Activated naive CD8-positive, alpha-beta T cell treated with anti-CD3 and anti-CD28 coated beads, Interleukin-2, amount 10 ng/mL, durations not matched to agents 7 days and 5 days (primary cell): ENCODE measurements at regions of chr17 and their contacts with region 1.

Region 1: DNA sequence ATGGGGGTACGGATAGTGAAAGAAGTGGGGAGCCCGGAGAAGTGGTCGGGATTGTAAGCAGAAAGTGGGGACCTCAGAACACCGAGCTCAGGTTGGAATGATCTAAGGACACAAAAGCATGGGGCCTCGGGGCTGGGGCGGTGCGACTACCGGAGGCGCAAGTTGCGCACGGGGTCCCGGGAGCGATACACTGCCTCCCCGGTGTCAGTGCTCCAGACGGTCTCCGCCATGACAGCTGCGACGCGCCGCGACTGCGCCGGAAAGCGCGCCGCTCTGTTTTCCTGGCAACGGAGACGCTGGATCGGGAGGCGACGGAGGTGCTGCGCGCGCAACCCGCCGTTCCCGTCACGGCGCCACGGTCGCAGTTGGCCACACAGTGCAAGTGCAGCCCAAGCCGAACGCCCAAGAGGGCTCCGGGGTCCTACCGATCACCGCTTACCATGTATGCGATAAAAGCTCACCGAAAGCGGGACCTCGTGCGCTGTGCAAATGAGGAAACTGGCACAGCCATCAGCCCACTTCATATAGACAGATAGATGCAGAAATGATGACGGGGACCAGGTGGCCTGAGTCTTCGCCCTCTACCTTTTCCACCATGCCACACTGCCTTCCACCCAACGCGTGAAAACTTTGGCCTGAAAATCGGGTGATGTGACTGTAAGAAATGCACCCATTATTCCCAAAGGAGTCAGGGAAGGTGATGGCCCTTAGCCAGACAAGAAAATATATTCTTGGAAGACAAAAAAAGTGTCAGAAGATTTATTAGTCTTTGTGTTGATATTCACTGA is at the start of gene MKS1:
- DNase-seq: peak; percentile 96
- ATAC-seq: peak; percentile 100
- H3K4me3 Mint-ChIP-seq: peak within 1 kb of the TSS; percentile 91
- H3K27ac Mint-ChIP-seq: peak within 1 kb of the TSS; percentile 86
- H3K4me1 Mint-ChIP-seq: peaks cover 16% of the 10 kb centered on the region
- H3K27me3 Mint-ChIP-seq: peaks cover 6% of the 10 kb centered on the region
- total RNA-seq, gene MKS1: 23.0 to 26.5 TPM

Region 2: GRCh38 chr17:58247511-58248363 is 28.5 kb after region 1 on chr17:
- POLR2A ChIA-PET with region 1: interaction called, 10 read pairs
- DNase-seq: no peak
- ATAC-seq: peak; percentile 46
- H3K4me3 Mint-ChIP-seq: peak overlapping the region; percentile 64
- H3K27ac Mint-ChIP-seq: peak overlapping the region; percentile 76
- H3K4me1 Mint-ChIP-seq: peaks cover 31% of the 10 kb centered on the region
- H3K27me3 Mint-ChIP-seq: peaks cover 46% of the 10 kb centered on the region